ENCODE measurements at regions of chr6 and their contacts with region 1.

Region 1: GRCh38 chr6:43229803-43230620 is 731 bp upstream of the DNPH1 start:
- DNase-seq: no peak
- H3K4me3 ChIP-seq: no peak overlapping the region; the same call in 1 of the 2 replicates
- H3K27ac ChIP-seq: no peak overlapping the region
- H3K4me1 ChIP-seq: 0 out of 2 replicates have a peak, but pooled peaks cover 9% of the 10 kb centered on the region
- H3K27me3 ChIP-seq: no peaks in the 10 kb centered on the region
- CTCF ChIP-seq: no peak

Region 2: GRCh38 chr6:43096451-43097097 is 133.4 kb before region 1 on chr6:
- CTCF ChIA-PET with region 1: no interaction called
- POLR2A ChIA-PET with region 1: no interaction called
- intact Hi-C with region 1: no loop called
- DNase-seq: peak; percentile 89 to 98
- H3K4me3 ChIP-seq: peak overlapping the region; percentile 47; the same call in 1 of the 2 replicates
- H3K27ac ChIP-seq: peak overlapping the region; percentile 89
- H3K4me1 ChIP-seq: peaks cover 60% of the 10 kb centered on the region
- H3K27me3 ChIP-seq: no peaks in the 10 kb centered on the region
- CTCF ChIP-seq: no peak; the same call in 1 of the 2 replicates

Region 3: DNA sequence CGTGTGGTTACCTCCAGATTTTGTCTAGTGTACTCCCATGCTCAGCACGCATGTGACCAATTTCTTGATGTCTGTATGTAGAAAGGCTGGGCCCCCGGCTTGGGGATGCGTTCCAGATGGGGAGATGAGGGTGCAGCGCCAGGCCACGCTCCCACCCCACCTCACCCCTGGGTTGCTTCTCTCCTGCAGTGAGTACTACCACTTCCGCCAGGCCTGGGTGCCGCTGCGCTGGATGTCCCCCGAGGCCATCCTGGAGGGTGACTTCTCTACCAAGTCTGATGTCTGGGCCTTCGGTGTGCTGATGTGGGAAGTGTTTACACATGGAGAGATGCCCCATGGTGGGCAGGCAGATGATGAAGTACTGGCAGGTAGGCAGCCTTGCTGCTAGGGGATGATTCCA is 70.4 kb before region 1 on chr6:
- CTCF ChIA-PET with region 1: interaction called, 14 read pairs
- POLR2A ChIA-PET with region 1: no interaction called
- intact Hi-C with region 1: no loop called
- DNase-seq: no peak
- H3K4me3 ChIP-seq: no peak overlapping the region
- H3K27ac ChIP-seq: no peak overlapping the region
- H3K4me1 ChIP-seq: no peaks in the 10 kb centered on the region
- H3K27me3 ChIP-seq: no peaks in the 10 kb centered on the region
- CTCF ChIP-seq: no peak

Region 4: DNA sequence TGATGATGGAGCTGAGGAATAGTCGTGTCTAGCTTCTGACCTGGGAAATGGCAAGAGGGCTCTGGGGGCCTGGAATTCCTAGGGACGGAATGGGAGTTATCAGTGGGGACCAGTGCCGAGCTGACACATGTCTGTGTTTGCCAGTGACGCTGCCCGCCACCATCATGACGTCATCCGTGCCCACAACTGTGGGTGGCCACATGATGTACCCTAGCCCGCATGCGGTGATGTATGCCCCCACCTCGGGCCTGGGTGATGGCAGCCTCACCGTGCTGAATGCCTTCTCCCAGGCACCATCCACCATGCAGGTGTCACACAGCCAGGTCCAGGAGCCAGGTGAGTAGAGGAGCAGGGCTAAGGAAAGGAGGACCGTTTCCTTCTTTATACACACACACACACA is 51.9 kb before region 1 on chr6:
- CTCF ChIA-PET with region 1: no interaction called
- POLR2A ChIA-PET with region 1: no interaction called
- intact Hi-C with region 1: no loop called
- DNase-seq: no peak
- H3K4me3 ChIP-seq: no peak overlapping the region
- H3K27ac ChIP-seq: no peak overlapping the region
- H3K4me1 ChIP-seq: peaks cover 38% of the 10 kb centered on the region
- H3K27me3 ChIP-seq: no peaks in the 10 kb centered on the region
- CTCF ChIP-seq: no peak

Region 5: GRCh38 chr6:43211955-43212354 is 18.1 kb before region 1 on chr6:
- CTCF ChIA-PET with region 1: no interaction called
- POLR2A ChIA-PET with region 1: no interaction called
- intact Hi-C with region 1: no loop called
- DNase-seq: no peak
- H3K4me3 ChIP-seq: no peak overlapping the region
- H3K27ac ChIP-seq: no peak overlapping the region
- H3K4me1 ChIP-seq: no peaks in the 10 kb centered on the region; the same call in 1 of the 2 replicates
- H3K27me3 ChIP-seq: no peaks in the 10 kb centered on the region
- CTCF ChIP-seq: no peak

Region 6: DNA sequence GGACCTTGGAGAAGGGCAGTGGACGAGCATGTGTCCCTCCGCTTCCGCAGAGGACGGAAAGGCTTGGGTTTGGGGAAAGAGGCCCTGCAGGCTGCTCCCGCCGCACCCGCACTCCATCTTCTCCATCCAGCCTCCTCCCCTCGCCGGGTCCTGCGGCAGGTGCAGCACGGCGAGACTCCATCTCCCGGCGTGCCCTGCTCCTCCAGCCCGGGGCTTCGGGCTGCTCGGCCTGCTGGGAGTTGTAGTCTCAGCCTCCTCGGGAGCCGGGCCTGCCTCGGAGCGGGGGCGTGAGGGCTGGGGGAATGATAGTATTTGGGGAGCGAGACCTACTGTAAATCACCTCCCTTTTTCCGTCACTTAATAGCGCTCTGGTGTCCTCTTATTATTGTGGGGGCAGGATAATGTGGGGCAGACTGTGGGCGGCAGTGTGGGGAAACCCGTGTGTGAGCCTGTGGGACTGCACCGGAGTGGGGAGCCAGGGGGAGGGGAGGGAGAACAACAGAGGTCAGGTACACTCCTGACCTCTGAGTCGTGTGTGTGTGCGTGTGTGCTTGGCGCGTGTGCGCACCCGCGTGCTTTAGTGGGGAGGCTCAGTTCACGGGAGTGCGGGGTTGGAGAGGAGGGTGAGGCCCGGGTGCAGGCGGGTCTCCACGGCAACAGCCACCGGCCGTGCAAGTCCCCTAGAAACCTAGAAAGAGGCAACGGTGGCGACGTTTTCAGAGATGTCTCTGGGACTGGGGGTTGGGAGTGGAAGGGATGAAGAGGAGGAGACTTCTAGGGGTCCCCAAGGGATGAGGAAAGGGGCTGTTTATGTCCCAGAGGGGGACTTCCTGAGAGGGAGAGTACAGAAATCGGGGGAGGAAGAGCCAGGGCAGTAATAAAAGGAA is 17.3 kb after region 1 on chr6:
- CTCF ChIA-PET with region 1: interaction called, 20 read pairs
- POLR2A ChIA-PET with region 1: interaction called, 3 read pairs
- intact Hi-C with region 1: no loop called
- DNase-seq: peak; percentile 44 to 75
- H3K4me3 ChIP-seq: peak overlapping the region; percentile 52
- H3K27ac ChIP-seq: no peak overlapping the region
- H3K4me1 ChIP-seq: no peaks in the 10 kb centered on the region
- H3K27me3 ChIP-seq: peaks cover 26% of the 10 kb centered on the region
- CTCF ChIP-seq: no peak

Region 7: DNA sequence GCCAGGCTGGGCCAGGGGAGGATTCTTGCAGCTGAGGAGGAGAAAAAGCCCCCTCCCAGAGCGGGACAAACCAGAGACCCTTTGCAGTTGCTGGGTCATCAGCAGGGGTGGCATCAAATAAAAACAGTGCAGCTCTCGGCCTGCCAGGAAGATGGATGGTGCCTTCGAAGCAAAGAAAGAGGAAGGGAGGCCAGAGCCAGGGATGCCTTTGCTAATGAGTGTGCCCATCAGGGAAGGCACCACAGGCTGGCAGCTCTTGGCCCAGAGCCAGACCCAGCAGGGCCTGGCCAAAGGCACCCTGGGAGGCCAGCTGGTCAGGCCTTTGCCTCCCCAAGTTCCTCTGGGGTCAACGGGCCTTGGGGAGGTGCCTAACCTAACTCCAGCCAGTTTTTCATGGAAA is 165.8 kb after region 1 on chr6:
- CTCF ChIA-PET with region 1: no interaction called
- POLR2A ChIA-PET with region 1: no interaction called
- intact Hi-C with region 1: no loop called
- DNase-seq: peak in 1 of 2 experiments; percentile 16
- H3K4me3 ChIP-seq: no peak overlapping the region
- H3K27ac ChIP-seq: peak overlapping the region; percentile 62
- H3K4me1 ChIP-seq: peaks cover 40% of the 10 kb centered on the region
- H3K27me3 ChIP-seq: no peaks in the 10 kb centered on the region
- CTCF ChIP-seq: no peak